Natural killer cell (primary cell): ENCODE measurements at regions of chr17 and their contacts with region 1.

Region 1: DNA sequence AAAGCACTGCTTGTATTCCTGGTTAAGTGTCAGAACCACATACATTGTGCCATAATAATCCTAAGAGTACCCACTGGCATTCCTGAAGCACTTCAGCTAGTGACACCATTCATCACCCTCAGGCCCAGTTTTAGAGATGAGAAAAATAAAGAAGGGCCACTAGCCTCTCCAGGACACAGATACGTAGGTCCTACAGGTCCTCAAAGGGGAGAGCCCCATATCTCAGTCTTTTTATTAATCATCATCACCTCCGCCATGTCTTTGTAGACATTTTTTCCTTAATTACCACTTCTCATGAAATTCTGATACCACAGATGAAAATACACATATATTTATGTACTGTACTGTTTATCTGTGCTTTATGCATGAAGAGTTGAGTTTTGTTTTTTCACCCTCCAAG is 43.5 kb downstream of the GRB2 start:
- DNase-seq: no peak
- ATAC-seq: no peak
- H3K4me3 ChIP-seq: no peak overlapping the region
- H3K4me3 Mint-ChIP-seq: no peak overlapping the region
- H3K27ac ChIP-seq: no peak overlapping the region
- H3K27ac Mint-ChIP-seq: peak overlapping the region in 1 of 2 donors; percentile 55
- H3K4me1 ChIP-seq: peaks cover 12% of the 10 kb centered on the region
- H3K4me1 Mint-ChIP-seq: peaks cover 71 to 74% of the 10 kb centered on the region in 2 donors
- H3K27me3 ChIP-seq: no peaks in the 10 kb centered on the region
- H3K27me3 Mint-ChIP-seq: no peaks in the 10 kb centered on the region
- CTCF ChIP-seq: no peak

Region 2: GRCh38 chr17:74671031-74671771 is 690.8 kb before region 1 on chr17:
- intact Hi-C with region 1: no loop called
- DNase-seq: peak; percentile 77 to 88
- ATAC-seq: peak; percentile 95 to 99 (median 99)
- H3K4me3 ChIP-seq: no peak overlapping the region
- H3K4me3 Mint-ChIP-seq: no peak overlapping the region
- H3K27ac ChIP-seq: no peak overlapping the region
- H3K27ac Mint-ChIP-seq: peak overlapping the region in 1 of 2 donors; percentile 41
- H3K4me1 ChIP-seq: peaks cover 10% of the 10 kb centered on the region
- H3K4me1 Mint-ChIP-seq: peaks cover 14 to 21% of the 10 kb centered on the region in 2 donors
- H3K27me3 ChIP-seq: peaks cover 40% of the 10 kb centered on the region
- H3K27me3 Mint-ChIP-seq: peaks cover 38 to 56% of the 10 kb centered on the region in 2 donors
- CTCF ChIP-seq: no peak

Region 3: GRCh38 chr17:75205037-75205792 is 156.8 kb before region 1 on chr17 and contains the start of gene NUP85:
- intact Hi-C with region 1: no loop called
- DNase-seq: peak; percentile 90 to 95
- ATAC-seq: peak; percentile 92 to 96 (median 92)
- H3K4me3 ChIP-seq: peak within 1 kb of the TSS; percentile 84
- H3K4me3 Mint-ChIP-seq: peak within 1 kb of the TSS; percentile 96
- H3K27ac ChIP-seq: peak within 1 kb of the TSS; percentile 80
- H3K27ac Mint-ChIP-seq: peak within 1 kb of the TSS; percentile 93 to 97
- H3K4me1 ChIP-seq: peaks cover 20% of the 10 kb centered on the region
- H3K4me1 Mint-ChIP-seq: peaks cover 20 to 28% of the 10 kb centered on the region in 2 donors
- H3K27me3 ChIP-seq: no peaks in the 10 kb centered on the region
- H3K27me3 Mint-ChIP-seq: no peaks in the 10 kb centered on the region
- CTCF ChIP-seq: no peak
- total RNA-seq, gene NUP85: 71.1 to 78.1 (median 77.0) TPM

Region 4: GRCh38 chr17:75345514-75346167 is 16.4 kb before region 1 on chr17:
- intact Hi-C with region 1: loop called (anchors 2 kb)
- DNase-seq: peak in 1 of 2 donors; percentile 75
- ATAC-seq: peak; percentile 30 to 50 (median 41)
- H3K4me3 ChIP-seq: peak overlapping the region; percentile 5
- H3K4me3 Mint-ChIP-seq: peak overlapping the region; percentile 83
- H3K27ac ChIP-seq: peak overlapping the region; percentile 84
- H3K27ac Mint-ChIP-seq: peak overlapping the region; percentile 78 to 91
- H3K4me1 ChIP-seq: peaks cover 73% of the 10 kb centered on the region
- H3K4me1 Mint-ChIP-seq: peaks cover 77 to 88% of the 10 kb centered on the region in 2 donors
- H3K27me3 ChIP-seq: no peaks in the 10 kb centered on the region
- H3K27me3 Mint-ChIP-seq: no peaks in the 10 kb centered on the region
- CTCF ChIP-seq: no peak